ENCODE measurements at regions of chr20 and their contacts with region 1.

Region 1: DNA sequence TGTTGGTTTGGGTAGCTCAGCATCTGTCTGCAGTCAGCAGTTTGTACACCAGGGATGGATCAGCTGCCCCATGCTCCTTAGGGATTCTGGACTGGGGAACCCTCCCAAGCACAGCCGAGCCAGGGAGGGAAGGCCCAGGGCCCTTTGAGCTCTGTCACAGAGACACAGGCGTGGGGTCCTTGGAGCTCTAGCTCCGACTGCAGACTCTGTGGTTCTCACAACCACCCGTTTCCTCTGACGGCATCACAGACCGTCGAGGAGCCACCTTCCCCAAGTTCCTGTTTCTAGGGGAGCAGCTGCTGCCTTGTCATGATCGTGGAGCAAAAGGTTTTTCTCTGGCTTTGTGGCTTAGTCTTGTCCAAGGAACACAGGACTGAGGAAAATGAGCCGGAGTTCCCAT is at the start of gene SLA2:
- DNase-seq: no peak
- ATAC-seq: no peak; the same call in 1 of the 2 replicates
- H3K4me3 Mint-ChIP-seq: no peak within 1 kb of the TSS
- H3K27ac Mint-ChIP-seq: peak within 1 kb of the TSS; percentile 88
- H3K4me1 Mint-ChIP-seq: peaks cover 28% of the 10 kb centered on the region
- H3K27me3 Mint-ChIP-seq: peaks cover 1% of the 10 kb centered on the region
- CTCF ChIP-seq: no peak
- total RNA-seq, gene SLA2: 0.11 to 0.23 TPM (median 0.17 TPM) in 3 replicates

Region 2: DNA sequence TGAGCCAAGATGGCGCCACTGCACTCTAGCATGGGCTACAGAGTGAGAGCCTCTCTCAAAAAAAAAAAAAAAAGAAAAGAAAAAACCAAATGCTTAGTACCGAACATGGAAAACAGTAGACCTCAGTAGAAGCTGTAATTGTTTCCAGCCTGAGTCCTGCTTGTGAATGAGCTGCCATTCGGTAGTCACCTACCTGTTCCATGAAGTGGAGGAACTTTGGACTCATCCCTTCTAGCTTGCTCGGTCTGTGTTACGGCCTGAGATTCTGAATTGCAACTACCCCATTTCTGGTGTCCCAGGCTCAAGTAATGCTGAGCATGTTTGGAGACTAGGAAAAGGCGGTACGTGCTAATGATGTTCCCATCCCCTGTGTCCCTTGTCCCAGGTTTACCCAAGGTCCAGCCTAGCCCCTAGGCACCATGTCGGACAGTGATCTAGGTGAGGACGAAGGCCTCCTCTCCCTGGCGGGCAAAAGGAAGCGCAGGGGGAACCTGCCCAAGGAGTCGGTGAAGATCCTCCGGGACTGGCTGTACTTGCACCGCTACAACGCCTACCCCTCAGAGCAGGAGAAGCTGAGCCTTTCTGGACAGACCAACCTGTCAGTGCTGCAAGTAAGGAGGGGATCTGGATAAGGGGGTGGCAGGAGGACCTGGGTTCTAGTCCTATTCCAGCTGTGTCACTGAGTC is 67.5 kb before region 1 on chr20:
- CTCF ChIA-PET with region 1: no interaction called
- POLR2A ChIA-PET with region 1: no interaction called
- DNase-seq: no peak
- ATAC-seq: no peak
- H3K4me3 Mint-ChIP-seq: no peak overlapping the region
- H3K27ac Mint-ChIP-seq: no peak overlapping the region
- H3K4me1 Mint-ChIP-seq: peaks cover 32% of the 10 kb centered on the region
- H3K27me3 Mint-ChIP-seq: no peaks in the 10 kb centered on the region
- CTCF ChIP-seq: no peak

Region 3: DNA sequence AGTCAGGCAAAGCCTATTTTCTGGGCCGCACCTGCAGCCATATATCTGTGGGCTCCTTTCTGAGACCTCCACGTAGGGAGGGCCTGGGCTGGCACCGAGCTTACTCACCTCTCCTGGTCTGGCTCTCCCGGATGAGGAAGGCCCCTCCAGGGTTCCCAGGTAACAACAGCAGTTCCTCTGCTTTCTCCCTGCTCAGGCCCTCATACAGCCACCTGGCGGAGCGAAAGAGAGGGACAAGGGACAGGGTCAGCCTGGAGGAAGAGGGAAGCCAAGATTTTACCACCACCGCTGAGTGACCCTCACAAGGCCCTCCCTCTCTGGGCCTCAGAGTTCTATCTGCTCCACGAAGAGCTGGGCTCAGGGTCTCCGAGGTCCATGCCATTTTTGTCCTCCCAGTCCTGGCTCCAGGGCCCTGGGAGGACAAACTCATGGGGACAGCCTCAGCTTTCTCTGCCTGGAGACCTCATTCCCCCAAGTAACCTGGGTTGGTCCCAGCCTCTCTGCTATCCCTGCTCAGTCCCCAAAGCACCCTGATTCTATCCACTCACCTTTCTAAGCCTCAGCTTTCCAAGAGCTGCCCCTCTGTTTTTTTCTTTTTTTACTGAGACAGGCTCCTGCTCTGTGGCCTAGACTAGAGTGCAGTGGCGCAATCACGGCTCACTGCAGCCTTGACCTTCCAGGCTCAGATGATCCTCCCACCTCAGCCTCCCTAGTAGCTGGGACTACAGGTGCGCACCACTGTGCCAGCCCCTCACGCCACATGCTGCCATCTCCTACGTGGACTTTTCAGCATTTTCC is 13.3 kb before region 1 on chr20:
- CTCF ChIA-PET with region 1: interaction called, 11 read pairs
- POLR2A ChIA-PET with region 1: no interaction called
- DNase-seq: peak; percentile 70
- ATAC-seq: peak; percentile 95
- H3K4me3 Mint-ChIP-seq: no peak overlapping the region
- H3K27ac Mint-ChIP-seq: no peak overlapping the region
- H3K4me1 Mint-ChIP-seq: 0 out of 2 replicates have a peak, but pooled peaks cover 3% of the 10 kb centered on the region
- H3K27me3 Mint-ChIP-seq: no peaks in the 10 kb centered on the region; the same call in 1 of the 2 replicates
- CTCF ChIP-seq: no peak

Measured in WTC11 (cell line).